ENCODE measurements at regions of chr11 and their contacts with region 1.

Region 1: GRCh38 chr11:78202733-78203167 is 14.0 kb downstream of the USP35 start:
- DNase-seq: peak; percentile 61
- ATAC-seq: peak; percentile 90
- H3K4me3 Mint-ChIP-seq: peak overlapping the region; percentile 48
- H3K27ac Mint-ChIP-seq: peak overlapping the region; percentile 87
- H3K4me1 Mint-ChIP-seq: peaks cover 30% of the 10 kb centered on the region
- H3K27me3 Mint-ChIP-seq: no peaks in the 10 kb centered on the region
- CTCF ChIP-seq: no peak

Region 2: DNA sequence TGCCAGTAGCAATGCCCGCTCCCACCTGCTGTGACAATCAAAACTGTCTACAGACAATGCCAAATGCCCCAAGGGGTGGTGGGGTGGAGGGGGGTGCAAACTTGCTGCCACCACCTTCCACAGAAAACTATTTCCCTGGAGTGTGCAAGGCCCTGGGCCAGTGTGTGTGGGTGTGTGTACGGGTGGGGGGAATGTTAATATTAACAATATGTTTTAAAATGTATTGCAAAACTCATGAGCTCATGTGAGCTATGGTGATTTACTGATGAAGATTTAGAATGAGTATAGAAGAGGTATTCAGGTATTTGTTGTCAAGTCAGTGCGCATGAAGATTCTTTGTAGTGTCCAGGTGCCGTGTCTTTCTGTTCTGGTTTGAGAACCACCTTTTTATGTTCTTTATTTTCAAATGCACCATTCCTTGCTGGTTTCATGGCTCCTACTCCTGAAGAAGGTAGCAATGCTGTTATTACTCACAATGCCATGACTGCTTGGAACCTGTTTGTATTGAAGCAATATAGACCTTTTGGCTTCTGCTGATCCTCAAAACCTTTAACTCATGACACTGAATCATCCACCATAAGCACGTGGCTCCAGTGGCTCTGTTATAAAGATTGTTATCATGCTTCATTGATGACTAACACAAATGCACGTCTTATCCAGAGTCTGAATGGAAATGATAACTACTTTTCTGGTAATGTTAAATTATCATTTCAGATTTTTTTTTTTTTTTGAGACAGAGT is 642.9 kb before region 1 on chr11:
- CTCF ChIA-PET with region 1: no interaction called
- POLR2A ChIA-PET with region 1: no interaction called
- intact Hi-C with region 1: no loop called
- DNase-seq: no peak
- ATAC-seq: no peak
- H3K4me3 Mint-ChIP-seq: no peak overlapping the region
- H3K27ac Mint-ChIP-seq: no peak overlapping the region
- H3K4me1 Mint-ChIP-seq: no peaks in the 10 kb centered on the region
- H3K27me3 Mint-ChIP-seq: peaks cover 2% of the 10 kb centered on the region
- CTCF ChIP-seq: no peak

Region 3: DNA sequence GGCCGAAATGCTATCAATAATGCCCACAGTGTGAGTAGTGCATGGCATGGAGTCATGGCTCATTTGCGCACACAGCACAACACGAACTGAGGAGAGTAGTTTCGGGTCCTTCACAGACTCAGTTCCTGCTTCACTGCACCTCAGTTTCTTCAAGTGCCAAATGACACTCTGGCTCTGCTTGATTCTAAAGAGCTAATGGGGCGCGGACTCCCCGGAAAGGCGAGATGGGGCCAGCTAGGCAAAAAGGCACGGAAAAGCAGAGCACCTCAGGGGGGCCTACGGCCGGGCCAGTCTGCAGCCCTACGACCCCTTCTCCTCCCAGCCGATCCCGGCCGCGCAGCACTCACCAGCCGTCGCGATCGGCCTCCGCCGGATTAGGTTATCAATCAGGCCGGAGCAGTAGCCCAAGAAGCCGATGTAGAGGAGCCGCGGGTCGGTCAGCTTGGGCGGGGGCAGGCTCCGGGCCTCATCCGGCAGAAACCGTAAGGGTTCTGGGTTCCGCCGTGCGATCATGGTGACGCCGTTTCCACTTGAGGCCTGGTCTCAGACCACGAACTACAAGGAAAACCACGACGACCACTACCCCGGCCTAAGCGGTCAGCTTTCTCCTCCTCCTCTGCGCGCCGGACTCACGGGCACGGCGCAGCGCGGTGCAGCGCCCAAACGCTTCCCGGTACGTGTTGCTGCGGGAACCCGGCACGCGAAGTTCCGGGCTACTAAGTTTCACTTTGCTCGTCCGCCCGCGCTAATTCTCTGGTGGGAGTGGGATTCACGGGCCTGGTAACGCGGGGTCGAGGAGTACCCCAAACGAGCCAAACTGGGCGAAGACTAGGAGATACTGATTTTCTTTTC is 123.3 kb before region 1 on chr11 and contains the start of gene NDUFC2:
- CTCF ChIA-PET with region 1: interaction called, 3 read pairs
- POLR2A ChIA-PET with region 1: interaction called, 5 read pairs
- intact Hi-C with region 1: loop called (anchors 2 kb)
- DNase-seq: peak; percentile 75
- ATAC-seq: peak; percentile 78
- H3K4me3 Mint-ChIP-seq: peak within 1 kb of the TSS; percentile 91
- H3K27ac Mint-ChIP-seq: peak within 1 kb of the TSS; percentile 88
- H3K4me1 Mint-ChIP-seq: peaks cover 42% of the 10 kb centered on the region
- H3K27me3 Mint-ChIP-seq: no peaks in the 10 kb centered on the region
- CTCF ChIP-seq: no peak
- total RNA-seq, gene NDUFC2: 169 to 179 TPM

Region 4: DNA sequence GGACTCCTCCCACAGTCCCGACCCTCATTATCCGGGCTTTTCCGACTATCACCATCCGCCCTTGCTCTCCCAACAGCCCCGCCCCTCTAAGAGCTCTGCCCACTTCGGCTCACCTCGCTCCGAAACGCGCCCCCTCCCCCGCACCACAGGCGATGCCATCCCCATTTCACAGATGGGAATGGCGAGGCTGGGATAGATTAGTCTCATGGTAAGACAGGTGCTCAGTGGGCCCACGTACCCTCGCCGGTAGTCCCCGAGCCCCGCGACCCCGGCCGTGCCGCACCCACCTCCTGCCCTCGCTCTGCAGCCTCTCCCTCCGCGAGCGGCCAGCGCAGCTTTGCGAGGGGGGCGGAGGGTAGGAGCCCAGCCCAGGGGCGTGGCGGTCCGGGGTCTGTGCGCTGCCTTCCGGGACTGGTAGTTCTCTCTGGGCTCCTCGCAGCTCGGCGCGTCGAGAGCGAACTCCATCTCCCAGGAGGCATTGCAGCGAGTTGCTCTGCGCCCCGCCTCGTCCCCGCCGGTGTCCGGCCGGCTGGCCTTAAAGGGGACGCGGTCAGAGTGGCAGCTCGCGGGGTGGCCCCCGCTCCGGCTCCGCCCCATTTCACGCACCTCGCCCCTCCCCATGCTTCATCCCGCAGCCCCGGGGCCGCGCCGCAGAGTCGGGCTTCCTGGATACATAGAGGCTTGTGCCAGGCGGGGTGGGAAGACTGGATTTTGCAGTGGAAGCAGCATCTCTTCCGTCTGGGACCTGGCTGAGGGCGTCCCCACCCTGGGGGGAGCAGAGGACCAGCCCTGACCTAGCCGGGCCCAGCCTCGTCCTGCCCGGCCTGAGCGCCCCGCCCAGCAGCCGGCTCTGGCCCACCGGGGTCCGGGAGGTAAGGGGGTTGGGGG is 14.2 kb before region 1 on chr11 and contains the starts of genes KCTD21 and USP35:
- CTCF ChIA-PET with region 1: interaction called, 6 read pairs
- POLR2A ChIA-PET with region 1: interaction called, 34 read pairs
- intact Hi-C with region 1: no loop called
- DNase-seq: peak; percentile 96
- ATAC-seq: peak; percentile 82
- H3K4me3 Mint-ChIP-seq: peak within 1 kb of the TSS; percentile 95
- H3K27ac Mint-ChIP-seq: peak within 1 kb of the TSS; percentile 99
- H3K4me1 Mint-ChIP-seq: peaks cover 50% of the 10 kb centered on the region
- H3K27me3 Mint-ChIP-seq: no peaks in the 10 kb centered on the region
- CTCF ChIP-seq: no peak
- total RNA-seq, gene KCTD21: 4.1 to 5.2 TPM
- total RNA-seq, gene USP35: 6.8 to 7.7 TPM

Region 5: GRCh38 chr11:78239781-78240180 is 37.0 kb after region 1 on chr11:
- CTCF ChIA-PET with region 1: no interaction called
- POLR2A ChIA-PET with region 1: no interaction called
- intact Hi-C with region 1: no loop called
- DNase-seq: no peak
- ATAC-seq: no peak
- H3K4me3 Mint-ChIP-seq: no peak overlapping the region
- H3K27ac Mint-ChIP-seq: no peak overlapping the region
- H3K4me1 Mint-ChIP-seq: no peaks in the 10 kb centered on the region
- H3K27me3 Mint-ChIP-seq: no peaks in the 10 kb centered on the region
- CTCF ChIP-seq: no peak

Region 6: GRCh38 chr11:78295991-78296935 is 93.5 kb after region 1 on chr11:
- CTCF ChIA-PET with region 1: no interaction called
- POLR2A ChIA-PET with region 1: no interaction called
- intact Hi-C with region 1: no loop called
- DNase-seq: no peak
- ATAC-seq: no peak
- H3K4me3 Mint-ChIP-seq: no peak overlapping the region
- H3K27ac Mint-ChIP-seq: no peak overlapping the region
- H3K4me1 Mint-ChIP-seq: peaks cover 15% of the 10 kb centered on the region
- H3K27me3 Mint-ChIP-seq: no peaks in the 10 kb centered on the region
- CTCF ChIP-seq: no peak